GM12878 (cell line): ENCODE measurements at regions of chr7 and their contacts with region 1.

Region 1: GRCh38 chr7:98168181-98168905 is 42.9 kb upstream of the BHLHA15 start:
- DNase-seq: peak; percentile 16
- ATAC-seq: peak; percentile 74
- H3K4me3 ChIP-seq: no peak overlapping the region
- H3K27ac ChIP-seq: no peak overlapping the region
- H3K4me1 ChIP-seq: no peaks in the 10 kb centered on the region
- H3K27me3 ChIP-seq: no peaks in the 10 kb centered on the region
- CTCF ChIP-seq: peak; percentile 55 to 76 (median 64)
- EP300 ChIP-seq: no peak
- POLR2A ChIP-seq: no peak
- RAD21 ChIP-seq: peak; percentile 87

Region 2: GRCh38 chr7:98021588-98022351 is 146.6 kb before region 1 on chr7:
- CTCF ChIA-PET with region 1: interaction called, 450 read pairs
- POLR2A ChIA-PET with region 1: interaction called, 4 read pairs
- RAD21 ChIA-PET with region 1: interaction called, 297 read pairs
- SMC1A ChIA-PET with region 1: interaction called, 195 read pairs
- in situ Hi-C with region 1: loop called (anchors 5 kb)
- intact Hi-C with region 1: loop called (anchors 1 kb)
- DNase-seq: no peak
- ATAC-seq: peak; percentile 99
- H3K4me3 ChIP-seq: no peak overlapping the region
- H3K27ac ChIP-seq: no peak overlapping the region
- H3K4me1 ChIP-seq: no peaks in the 10 kb centered on the region
- H3K27me3 ChIP-seq: no peaks in the 10 kb centered on the region; a peak in 1 of 4 replicates
- CTCF ChIP-seq: peak; percentile 88 to 94 (median 92)
- EP300 ChIP-seq: no peak
- POLR2A ChIP-seq: no peak
- RAD21 ChIP-seq: peak; percentile 77

Region 3: GRCh38 chr7:98106647-98107445 is 61.5 kb before region 1 on chr7 and contains the start of gene LMTK2:
- CTCF ChIA-PET with region 1: interaction called, 128 read pairs
- POLR2A ChIA-PET with region 1: interaction called, 6 read pairs
- RAD21 ChIA-PET with region 1: interaction called, 24 read pairs
- SMC1A ChIA-PET with region 1: interaction called, 82 read pairs
- in situ Hi-C with region 1: no loop called
- intact Hi-C with region 1: loop called (anchors 1 kb)
- DNase-seq: peak; percentile 65
- ATAC-seq: peak; percentile 100
- H3K4me3 ChIP-seq: peak within 1 kb of the TSS; percentile 65
- H3K27ac ChIP-seq: no peak within 1 kb of the TSS
- H3K4me1 ChIP-seq: no peaks in the 10 kb centered on the region
- H3K27me3 ChIP-seq: no peaks in the 10 kb centered on the region
- CTCF ChIP-seq: peak; percentile 89 to 96 (median 94); a peak in 5 of 6 replicates
- EP300 ChIP-seq: no peak
- POLR2A ChIP-seq: peak; percentile 99
- RAD21 ChIP-seq: peak; percentile 76
- polyA plus RNA-seq, gene LMTK2: 0.68 to 1.1 TPM

Region 4: GRCh38 chr7:98133181-98133580 is 35.2 kb before region 1 on chr7:
- CTCF ChIA-PET with region 1: interaction called, 34 read pairs
- POLR2A ChIA-PET with region 1: no interaction called
- RAD21 ChIA-PET with region 1: interaction called, 21 read pairs
- SMC1A ChIA-PET with region 1: interaction called, 8 read pairs
- in situ Hi-C with region 1: no loop called
- intact Hi-C with region 1: no loop called
- DNase-seq: peak; percentile 63
- ATAC-seq: peak; percentile 82
- H3K4me3 ChIP-seq: no peak overlapping the region
- H3K27ac ChIP-seq: no peak overlapping the region
- H3K4me1 ChIP-seq: peaks cover 39% of the 10 kb centered on the region
- H3K27me3 ChIP-seq: no peaks in the 10 kb centered on the region
- CTCF ChIP-seq: no peak
- EP300 ChIP-seq: peak in 1 of 2 experiments; percentile 82; a peak in 3 of 4 replicates
- POLR2A ChIP-seq: no peak
- RAD21 ChIP-seq: no peak

Region 5: GRCh38 chr7:98178347-98178746 is 10.0 kb after region 1 on chr7:
- CTCF ChIA-PET with region 1: interaction called, 12 read pairs
- POLR2A ChIA-PET with region 1: interaction called, 3 read pairs
- RAD21 ChIA-PET with region 1: interaction called, 7 read pairs
- SMC1A ChIA-PET with region 1: interaction called, 6 read pairs
- in situ Hi-C with region 1: no loop called
- intact Hi-C with region 1: no loop called
- DNase-seq: no peak
- ATAC-seq: no peak
- H3K4me3 ChIP-seq: no peak overlapping the region
- H3K27ac ChIP-seq: no peak overlapping the region
- H3K4me1 ChIP-seq: no peaks in the 10 kb centered on the region
- H3K27me3 ChIP-seq: no peaks in the 10 kb centered on the region
- CTCF ChIP-seq: no peak
- EP300 ChIP-seq: no peak
- POLR2A ChIP-seq: no peak
- RAD21 ChIP-seq: no peak

Region 6: GRCh38 chr7:98240961-98241674 is 72.8 kb after region 1 on chr7:
- CTCF ChIA-PET with region 1: interaction called, 6 read pairs
- POLR2A ChIA-PET with region 1: no interaction called
- RAD21 ChIA-PET with region 1: interaction called, 4 read pairs
- SMC1A ChIA-PET with region 1: interaction called, 5 read pairs
- in situ Hi-C with region 1: no loop called
- intact Hi-C with region 1: loop called (anchors 2 kb)
- DNase-seq: no peak
- ATAC-seq: peak; percentile 95
- H3K4me3 ChIP-seq: no peak overlapping the region
- H3K27ac ChIP-seq: no peak overlapping the region
- H3K4me1 ChIP-seq: no peaks in the 10 kb centered on the region
- H3K27me3 ChIP-seq: no peaks in the 10 kb centered on the region
- CTCF ChIP-seq: peak; percentile 78 to 86 (median 85)
- EP300 ChIP-seq: no peak
- POLR2A ChIP-seq: no peak
- RAD21 ChIP-seq: peak; percentile 89

Region 7: GRCh38 chr7:98400542-98401340 is 232.4 kb after region 1 on chr7 and contains the start of gene BAIAP2L1:
- CTCF ChIA-PET with region 1: interaction called, 6 read pairs
- POLR2A ChIA-PET with region 1: no interaction called
- RAD21 ChIA-PET with region 1: interaction called, 12 read pairs
- SMC1A ChIA-PET with region 1: interaction called, 4 read pairs
- in situ Hi-C with region 1: no loop called
- intact Hi-C with region 1: no loop called
- DNase-seq: peak; percentile 48
- ATAC-seq: peak; percentile 94
- H3K4me3 ChIP-seq: peak within 1 kb of the TSS; percentile 92
- H3K27ac ChIP-seq: peak within 1 kb of the TSS; percentile 88
- H3K4me1 ChIP-seq: no peaks in the 10 kb centered on the region; the same call in 1 of the 2 replicates
- H3K27me3 ChIP-seq: peaks cover 0 to 3% of the 10 kb centered on the region in 2 experiments; a peak in 3 of 4 replicates
- CTCF ChIP-seq: no peak; a peak in 1 of 6 replicates
- EP300 ChIP-seq: no peak
- POLR2A ChIP-seq: peak; percentile 71
- RAD21 ChIP-seq: peak; percentile 68
- polyA plus RNA-seq, gene BAIAP2L1: 8.9 to 11.6 TPM